Heart left ventricle (tissue), 16 donors: ENCODE measurements at regions of chr18 and their contacts with region 1.

Region 1: DNA sequence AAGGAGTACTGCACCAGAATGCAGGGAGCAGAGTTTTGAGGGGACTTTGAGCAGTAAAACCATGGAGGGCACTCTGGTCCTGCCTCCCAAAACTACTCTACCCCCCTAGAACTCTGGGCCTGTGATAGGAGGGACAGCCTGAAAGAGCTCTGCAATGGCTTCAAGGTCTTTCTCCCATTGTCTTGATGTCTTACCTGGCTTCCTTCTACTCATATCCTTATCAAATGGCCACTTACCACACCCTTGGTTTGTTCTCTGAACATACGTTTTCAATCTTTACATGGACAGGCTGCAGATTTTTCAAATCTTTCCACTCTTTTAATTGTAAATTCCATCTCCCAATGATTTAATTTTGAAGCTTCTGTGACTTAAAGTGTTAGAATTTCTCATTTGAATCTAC is 27.7 kb downstream of the RELCH start:
- DNase-seq: no peak
- ATAC-seq: no peak
- H3K4me3 ChIP-seq: no peak overlapping the region
- H3K27ac ChIP-seq: no peak overlapping the region
- H3K4me1 ChIP-seq: peaks cover 0 to 2% (median 0%) of the 10 kb centered on the region in 12 donors
- H3K27me3 ChIP-seq: no peaks in the 10 kb centered on the region
- CTCF ChIP-seq: no peak
- POLR2A ChIP-seq: no peak

Region 2: GRCh38 chr18:62198259-62198658 is 16.5 kb before region 1 on chr18:
- intact Hi-C with region 1: loop called in 1 of 10 experiments (anchors 1 kb)
- DNase-seq: no peak
- ATAC-seq: no peak
- H3K4me3 ChIP-seq: no peak overlapping the region
- H3K27ac ChIP-seq: no peak overlapping the region
- H3K4me1 ChIP-seq: peaks cover 0 to 37% (median 12%) of the 10 kb centered on the region in 12 donors
- H3K27me3 ChIP-seq: no peaks in the 10 kb centered on the region
- CTCF ChIP-seq: no peak
- POLR2A ChIP-seq: no peak